PC-3 (cell line): ENCODE measurements at regions of chr6 and their contacts with region 1.

Region 1: DNA sequence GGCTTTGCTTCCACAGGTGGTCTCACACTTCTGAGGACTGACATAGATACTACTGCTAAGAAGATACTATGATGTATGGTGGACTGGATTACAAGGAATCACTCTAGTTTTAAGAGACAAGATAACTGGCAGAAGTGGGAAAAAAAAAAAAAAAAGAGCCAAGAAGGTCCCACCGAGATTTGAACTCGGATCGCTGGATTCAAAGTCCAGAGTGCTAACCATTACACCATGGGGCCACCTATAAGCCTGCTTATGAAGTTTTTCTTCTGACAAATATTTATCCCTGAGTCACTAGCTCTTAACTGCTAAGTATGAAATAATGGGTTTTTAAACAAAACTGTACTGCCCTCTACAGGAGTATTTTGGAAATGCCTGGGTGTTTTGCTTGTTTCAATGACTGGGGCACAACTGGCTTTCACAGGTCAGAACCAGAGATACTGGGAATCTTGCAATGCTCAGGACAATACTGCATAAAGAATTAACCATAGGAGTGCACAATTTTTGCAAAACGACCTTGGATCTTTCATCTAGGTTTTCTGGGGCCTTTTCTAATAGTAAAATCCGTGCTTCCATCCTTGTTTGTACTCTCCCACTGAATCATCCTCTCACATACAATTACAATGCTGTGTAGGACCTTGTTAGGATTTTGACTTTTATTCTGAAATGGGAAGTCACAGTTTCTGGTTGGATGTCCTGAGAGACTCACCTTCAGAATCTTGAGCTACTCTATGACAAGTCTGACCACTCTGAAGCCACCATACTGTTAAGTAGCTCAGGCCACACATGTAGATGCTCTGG is 116.3 kb downstream of the OR2B2 start:
- DNase-seq: peak; percentile 99
- ATAC-seq: peak; percentile 26
- H3K4me3 ChIP-seq: peak overlapping the region; percentile 16; the same call in 1 of the 2 replicates
- H3K27ac ChIP-seq: no peak overlapping the region
- H3K4me1 ChIP-seq: peaks cover 13% of the 10 kb centered on the region; the same call in 1 of the 2 replicates
- H3K27me3 ChIP-seq: no peaks in the 10 kb centered on the region
- CTCF ChIP-seq: peak; percentile 81

Region 2: GRCh38 chr6:27126815-27127537 is 668.9 kb before region 1 on chr6:
- CTCF ChIA-PET with region 1: no interaction called
- POLR2A ChIA-PET with region 1: no interaction called
- intact Hi-C with region 1: no loop called
- DNase-seq: peak; percentile 95
- ATAC-seq: peak; percentile 83
- H3K4me3 ChIP-seq: peak overlapping the region; percentile 59
- H3K27ac ChIP-seq: no peak overlapping the region
- H3K4me1 ChIP-seq: peaks cover 30% of the 10 kb centered on the region
- H3K27me3 ChIP-seq: no peaks in the 10 kb centered on the region
- CTCF ChIP-seq: peak; percentile 92

Region 3: GRCh38 chr6:27694545-27694870 is 101.4 kb before region 1 on chr6:
- CTCF ChIA-PET with region 1: interaction called, 12 read pairs
- POLR2A ChIA-PET with region 1: no interaction called
- intact Hi-C with region 1: no loop called
- DNase-seq: no peak
- ATAC-seq: no peak; the same call in 1 of the 2 replicates
- H3K4me3 ChIP-seq: peak overlapping the region; percentile 94
- H3K27ac ChIP-seq: peak overlapping the region; percentile 73
- H3K4me1 ChIP-seq: peaks cover 9% of the 10 kb centered on the region; the same call in 1 of the 2 replicates
- H3K27me3 ChIP-seq: no peaks in the 10 kb centered on the region
- CTCF ChIP-seq: no peak

Region 4: DNA sequence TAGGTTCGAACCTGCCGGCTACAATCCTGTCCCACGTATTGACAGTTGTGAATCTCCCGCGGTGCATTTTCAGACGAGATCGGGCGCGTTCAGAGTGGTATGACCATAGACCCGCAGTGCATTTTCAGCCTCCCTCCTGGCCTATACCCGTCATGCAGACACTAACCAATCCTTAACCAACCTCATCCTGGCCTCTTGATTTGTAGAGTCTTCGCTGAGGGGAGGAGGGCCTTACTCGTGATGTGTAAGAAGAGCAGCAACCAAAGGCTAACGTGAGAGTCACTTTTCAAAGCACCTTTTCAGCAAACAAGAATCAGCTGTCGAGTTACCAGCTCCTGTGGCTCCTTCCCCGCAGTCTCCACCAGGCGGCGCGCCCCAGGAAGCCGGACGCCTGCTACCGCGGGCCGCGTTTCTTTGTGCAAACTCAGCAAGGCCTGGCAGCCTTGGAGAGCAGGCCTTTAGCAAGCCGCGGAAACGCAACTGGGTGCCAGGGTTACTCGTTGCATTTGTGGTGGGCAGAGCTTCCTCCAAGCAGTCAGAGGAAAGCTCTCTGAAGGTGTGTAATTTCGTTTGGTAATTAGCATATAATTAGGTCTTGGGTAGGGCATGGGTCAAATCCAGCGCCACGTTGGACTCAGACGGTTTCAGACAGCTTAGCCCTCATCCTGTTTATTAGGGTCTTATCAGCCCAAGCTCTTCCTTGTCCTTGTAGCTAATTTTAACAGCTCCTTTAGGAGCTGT is 23.5 kb before region 1 on chr6:
- CTCF ChIA-PET with region 1: interaction called, 19 read pairs
- POLR2A ChIA-PET with region 1: no interaction called
- intact Hi-C with region 1: no loop called
- DNase-seq: peak; percentile 89
- ATAC-seq: peak; percentile 87
- H3K4me3 ChIP-seq: peak overlapping the region; percentile 57
- H3K27ac ChIP-seq: no peak overlapping the region
- H3K4me1 ChIP-seq: peaks cover 9% of the 10 kb centered on the region
- H3K27me3 ChIP-seq: no peaks in the 10 kb centered on the region
- CTCF ChIP-seq: peak; percentile 92